Heart right ventricle (tissue), 16 donors: ENCODE measurements at regions of chr2 and their contacts with region 1.

Region 1: GRCh38 chr2:74119912-74120825 is 27.5 kb downstream of the BOLA3 start:
- DNase-seq: peak; percentile 74 to 87
- ATAC-seq: peak; percentile 97 to 100 (median 99)
- H3K4me3 ChIP-seq: peak overlapping the region; percentile 45 to 86 (median 66)
- H3K27ac ChIP-seq: peak overlapping the region in 9 of 10 donors; percentile 3 to 93 (median 81)
- H3K4me1 ChIP-seq: peaks cover 0 to 13% (median 5%) of the 10 kb centered on the region in 9 donors
- H3K27me3 ChIP-seq: peaks cover 0 to under 1% (median 0%) of the 10 kb centered on the region in 7 donors
- CTCF ChIP-seq: peak in 8 of 9 donors; percentile 23 to 84 (median 69)

Region 2: GRCh38 chr2:74079522-74080341 is 40.4 kb before region 1 on chr2:
- intact Hi-C with region 1: loop called in 1 of 10 experiments (anchors 5 kb)
- DNase-seq: no peak
- ATAC-seq: peak in 2 of 8 donors; percentile 20 to 28
- H3K4me3 ChIP-seq: no peak overlapping the region
- H3K27ac ChIP-seq: no peak overlapping the region
- H3K4me1 ChIP-seq: peaks cover 0 to 52% (median 26%) of the 10 kb centered on the region in 9 donors
- H3K27me3 ChIP-seq: no peaks in the 10 kb centered on the region
- CTCF ChIP-seq: no peak